ENCODE measurements at regions of chr17 and their contacts with region 1.

Region 1: GRCh38 chr17:7989781-7990655 is 12.4 kb upstream of the GUCY2D start:
- DNase-seq: peak; percentile 44
- ATAC-seq: peak; percentile 88
- H3K4me3 ChIP-seq: peak overlapping the region; percentile 20 to 71 (median 57)
- H3K27ac ChIP-seq: no peak overlapping the region
- H3K4me1 ChIP-seq: peaks cover 11% of the 10 kb centered on the region
- H3K27me3 ChIP-seq: peaks cover 3 to 29% of the 10 kb centered on the region in 2 experiments
- CTCF ChIP-seq: peak; percentile 98
- EP300 ChIP-seq: no peak
- POLR2A ChIP-seq: no peak; a peak in 1 of 4 replicates
- RAD21 ChIP-seq: peak; percentile 85

Region 2: DNA sequence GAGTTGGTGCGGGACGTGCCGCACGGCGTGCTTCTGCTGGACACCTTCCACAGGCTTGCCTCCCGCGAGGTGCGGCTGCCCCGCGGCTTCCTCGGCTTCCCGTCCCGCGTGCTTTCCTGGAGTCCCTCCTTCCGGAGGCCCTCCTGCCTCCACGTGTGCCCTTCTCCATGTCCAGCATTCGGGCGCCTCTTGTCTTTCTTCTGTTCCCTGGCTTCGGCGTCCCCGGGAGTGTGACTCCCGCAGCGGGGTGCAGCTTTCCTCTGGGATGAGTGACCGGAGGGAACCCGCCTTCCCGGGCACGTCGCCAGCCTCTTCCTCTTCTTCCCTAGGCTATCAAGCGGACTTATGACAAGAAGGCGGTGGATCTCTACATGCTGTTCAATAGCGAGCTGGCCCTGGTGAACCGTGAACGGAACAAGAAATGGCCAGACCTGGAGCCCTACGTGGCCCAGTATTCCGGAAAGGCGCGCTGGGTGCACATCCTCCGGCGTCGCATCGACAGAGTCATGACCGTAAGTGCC is 249.5 kb before region 1 on chr17:
- CTCF ChIA-PET with region 1: interaction called, 15 read pairs
- POLR2A ChIA-PET with region 1: no interaction called
- in situ Hi-C with region 1: no loop called
- intact Hi-C with region 1: loop called (anchors 5 kb)
- DNase-seq: no peak
- ATAC-seq: no peak
- H3K4me3 ChIP-seq: no peak overlapping the region
- H3K27ac ChIP-seq: no peak overlapping the region
- H3K4me1 ChIP-seq: peaks cover 14% of the 10 kb centered on the region
- H3K27me3 ChIP-seq: peaks cover 11 to 54% of the 10 kb centered on the region in 2 experiments
- CTCF ChIP-seq: no peak
- EP300 ChIP-seq: no peak
- POLR2A ChIP-seq: no peak
- RAD21 ChIP-seq: no peak

Region 3: DNA sequence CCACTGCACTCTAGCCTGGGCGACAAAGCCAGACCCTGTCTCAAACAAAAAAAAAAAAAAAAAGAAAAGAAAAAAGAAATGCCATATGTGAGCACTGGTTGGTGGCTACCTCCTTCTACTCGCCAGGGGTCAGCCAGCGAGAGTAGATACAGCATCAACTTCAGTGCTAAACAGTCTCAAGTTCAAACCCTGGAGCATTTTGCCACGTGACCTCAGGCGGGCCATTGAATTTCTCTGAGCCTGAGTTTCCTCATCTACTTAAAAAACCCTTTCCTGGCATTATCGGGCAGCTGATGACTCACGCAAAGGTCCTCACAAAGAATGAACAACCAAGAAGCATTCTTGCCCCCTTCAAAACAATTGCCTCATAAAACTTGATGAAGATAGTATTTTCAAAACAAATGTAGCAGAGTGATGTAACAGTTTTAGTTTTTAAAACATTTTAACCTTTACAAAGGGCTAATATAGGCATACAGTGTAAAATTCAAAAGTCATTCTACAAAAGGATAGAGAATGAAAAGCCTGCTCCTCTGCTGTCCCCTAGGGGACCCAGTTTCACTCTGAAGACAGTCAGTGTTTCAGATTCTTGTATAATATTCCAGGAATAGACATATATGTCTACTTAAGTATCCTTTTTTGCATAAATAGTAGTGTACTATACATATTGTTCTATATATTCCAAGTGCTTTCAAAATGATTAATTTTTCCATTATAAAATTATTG is 244.1 kb before region 1 on chr17:
- CTCF ChIA-PET with region 1: interaction called, 15 read pairs
- POLR2A ChIA-PET with region 1: no interaction called
- in situ Hi-C with region 1: no loop called
- intact Hi-C with region 1: loop called (anchors 5 kb)
- DNase-seq: peak; percentile 61
- ATAC-seq: peak; percentile 54
- H3K4me3 ChIP-seq: no peak overlapping the region
- H3K27ac ChIP-seq: no peak overlapping the region
- H3K4me1 ChIP-seq: peaks cover 37% of the 10 kb centered on the region
- H3K27me3 ChIP-seq: peaks cover 0 to 16% of the 10 kb centered on the region in 2 experiments; a peak in 3 of 5 replicates
- CTCF ChIP-seq: no peak
- EP300 ChIP-seq: no peak
- POLR2A ChIP-seq: no peak
- RAD21 ChIP-seq: no peak

Region 4: GRCh38 chr17:7862692-7863437 is 127.2 kb before region 1 on chr17:
- CTCF ChIA-PET with region 1: interaction called, 20 read pairs
- POLR2A ChIA-PET with region 1: no interaction called
- in situ Hi-C with region 1: no loop called
- intact Hi-C with region 1: loop called (anchors 5 kb)
- DNase-seq: peak; percentile 91
- ATAC-seq: peak; percentile 77
- H3K4me3 ChIP-seq: peak overlapping the region in 1 of 3 experiments; percentile 11; a peak in 1 of 6 replicates
- H3K27ac ChIP-seq: peak overlapping the region; percentile 81
- H3K4me1 ChIP-seq: peaks cover 64% of the 10 kb centered on the region
- H3K27me3 ChIP-seq: no peaks in the 10 kb centered on the region; a peak in 1 of 5 replicates
- CTCF ChIP-seq: peak; percentile 78
- EP300 ChIP-seq: peak in 1 of 2 experiments; percentile 82; a peak in 2 of 4 replicates
- POLR2A ChIP-seq: no peak
- RAD21 ChIP-seq: peak; percentile 71

Region 5: GRCh38 chr17:7873051-7873450 is 117.0 kb before region 1 on chr17:
- CTCF ChIA-PET with region 1: no interaction called
- POLR2A ChIA-PET with region 1: no interaction called
- in situ Hi-C with region 1: no loop called
- intact Hi-C with region 1: no loop called
- DNase-seq: no peak
- ATAC-seq: no peak
- H3K4me3 ChIP-seq: no peak overlapping the region
- H3K27ac ChIP-seq: no peak overlapping the region
- H3K4me1 ChIP-seq: peaks cover 10% of the 10 kb centered on the region
- H3K27me3 ChIP-seq: no peaks in the 10 kb centered on the region
- CTCF ChIP-seq: no peak
- EP300 ChIP-seq: no peak
- POLR2A ChIP-seq: no peak
- RAD21 ChIP-seq: no peak

Region 6: DNA sequence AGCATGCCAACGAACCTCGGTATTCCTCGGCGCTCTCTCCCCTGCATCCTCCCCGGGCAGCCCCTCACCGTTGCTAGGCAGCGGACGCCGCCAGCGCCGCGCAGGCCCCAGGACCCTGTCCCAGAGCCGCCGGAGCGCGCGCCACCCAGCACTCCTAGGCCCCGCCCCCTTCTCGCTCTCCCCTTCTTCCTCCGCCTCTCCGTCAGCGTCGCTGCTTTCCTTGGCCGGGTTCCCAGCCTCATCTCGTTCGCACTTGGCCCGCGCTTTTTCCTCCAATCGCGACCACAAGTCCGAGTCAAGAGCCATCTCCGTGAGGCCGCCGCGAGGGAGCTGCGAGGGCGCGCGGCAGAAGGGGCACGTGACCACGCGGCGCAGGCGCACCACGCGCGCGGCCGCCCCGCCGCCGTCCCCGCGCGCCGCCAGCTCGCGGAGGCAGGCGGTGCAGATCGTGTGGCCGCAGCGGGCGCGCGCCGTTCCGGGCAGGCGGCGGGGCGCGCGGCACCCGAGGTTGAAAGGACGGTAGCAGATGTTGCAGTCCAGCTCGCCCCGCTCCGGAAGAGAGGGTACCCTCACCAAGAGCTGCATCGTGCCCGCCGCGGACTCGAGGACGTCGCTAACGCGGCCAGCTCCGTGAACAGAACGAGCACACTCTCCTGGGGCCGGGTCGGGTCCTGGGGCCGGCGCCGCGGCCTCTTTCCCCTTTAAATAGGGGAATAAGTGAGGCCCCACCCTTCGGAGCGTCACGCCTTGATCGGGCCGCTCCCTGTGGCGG is 74.2 kb before region 1 on chr17 and contains the start of gene RNF227:
- CTCF ChIA-PET with region 1: interaction called, 70 read pairs
- POLR2A ChIA-PET with region 1: no interaction called
- in situ Hi-C with region 1: loop called (anchors 5 kb)
- intact Hi-C with region 1: loop called (anchors 1 kb)
- DNase-seq: peak; percentile 14
- ATAC-seq: peak; percentile 67
- H3K4me3 ChIP-seq: peak within 1 kb of the TSS in 2 of 3 experiments; percentile 45 to 62; a peak in 3 of 6 replicates
- H3K27ac ChIP-seq: no peak within 1 kb of the TSS
- H3K4me1 ChIP-seq: peaks cover 22% of the 10 kb centered on the region
- H3K27me3 ChIP-seq: peaks cover 0 to 3% of the 10 kb centered on the region in 2 experiments; a peak in 1 of 5 replicates
- CTCF ChIP-seq: no peak; the same call in 1 of the 2 replicates
- EP300 ChIP-seq: no peak
- POLR2A ChIP-seq: no peak
- RAD21 ChIP-seq: no peak
- total RNA-seq, gene RNF227: 0.20 and 0.38 TPM in 2 replicates

Region 7: GRCh38 chr17:7931709-7932482 is 58.1 kb before region 1 on chr17 and contains the starts of genes CNTROB and TRAPPC1:
- CTCF ChIA-PET with region 1: interaction called, 3 read pairs
- POLR2A ChIA-PET with region 1: no interaction called
- in situ Hi-C with region 1: no loop called
- intact Hi-C with region 1: loop called (anchors 5 kb)
- DNase-seq: peak; percentile 97
- ATAC-seq: peak; percentile 94
- H3K4me3 ChIP-seq: peak within 1 kb of the TSS; percentile 80 to 93 (median 85)
- H3K27ac ChIP-seq: peak within 1 kb of the TSS; percentile 67
- H3K4me1 ChIP-seq: peaks cover 26% of the 10 kb centered on the region
- H3K27me3 ChIP-seq: no peaks in the 10 kb centered on the region; a peak in 1 of 5 replicates
- CTCF ChIP-seq: no peak
- EP300 ChIP-seq: 0 out of 4 replicates have a peak, but pooled peaks of 1 of the 2 experiments have one; percentile 24
- POLR2A ChIP-seq: peak; percentile 50 to 76
- RAD21 ChIP-seq: 0 out of 2 replicates have a peak, but pooled peaks have one; percentile 7
- total RNA-seq, gene CNTROB: 13.3 and 24.1 TPM in 2 replicates
- total RNA-seq, gene TRAPPC1: 28.1 and 36.9 TPM in 2 replicates

Region 8: DNA sequence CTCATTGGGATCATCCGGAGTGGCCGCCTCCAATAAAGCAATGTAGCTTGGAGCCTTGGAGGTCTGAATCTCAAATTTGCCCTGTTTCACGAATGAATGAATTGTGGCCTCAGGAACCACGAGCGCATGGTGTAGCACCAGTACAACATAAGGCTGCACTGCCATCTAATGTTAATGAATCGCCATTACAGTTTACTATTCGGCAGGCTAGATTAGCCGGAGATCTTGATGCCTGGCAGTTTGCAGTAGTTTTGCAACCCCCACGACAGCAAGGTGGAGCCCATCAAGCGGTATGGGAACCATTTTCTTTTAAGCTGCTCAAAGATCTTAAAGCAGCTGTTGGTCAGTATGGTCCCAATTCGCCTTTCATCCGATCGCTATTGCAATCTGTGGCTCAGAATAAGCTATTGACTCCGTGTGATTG is 67.7 kb after region 1 on chr17:
- CTCF ChIA-PET with region 1: interaction called, 15 read pairs
- POLR2A ChIA-PET with region 1: no interaction called
- in situ Hi-C with region 1: no loop called
- intact Hi-C with region 1: no loop called
- DNase-seq: peak; percentile 75
- ATAC-seq: peak; percentile 46
- H3K4me3 ChIP-seq: peak overlapping the region; percentile 38 to 64 (median 51); a peak in 5 of 6 replicates
- H3K27ac ChIP-seq: peak overlapping the region; percentile 92
- H3K4me1 ChIP-seq: peaks cover 56% of the 10 kb centered on the region
- H3K27me3 ChIP-seq: peaks cover 3 to 32% of the 10 kb centered on the region in 2 experiments; a peak in 4 of 5 replicates
- CTCF ChIP-seq: peak; percentile 82
- EP300 ChIP-seq: no peak
- POLR2A ChIP-seq: peak in 1 of 2 experiments; percentile 52; a peak in 2 of 4 replicates
- RAD21 ChIP-seq: peak; percentile 61; the same call in 1 of the 2 replicates

Region 9: DNA sequence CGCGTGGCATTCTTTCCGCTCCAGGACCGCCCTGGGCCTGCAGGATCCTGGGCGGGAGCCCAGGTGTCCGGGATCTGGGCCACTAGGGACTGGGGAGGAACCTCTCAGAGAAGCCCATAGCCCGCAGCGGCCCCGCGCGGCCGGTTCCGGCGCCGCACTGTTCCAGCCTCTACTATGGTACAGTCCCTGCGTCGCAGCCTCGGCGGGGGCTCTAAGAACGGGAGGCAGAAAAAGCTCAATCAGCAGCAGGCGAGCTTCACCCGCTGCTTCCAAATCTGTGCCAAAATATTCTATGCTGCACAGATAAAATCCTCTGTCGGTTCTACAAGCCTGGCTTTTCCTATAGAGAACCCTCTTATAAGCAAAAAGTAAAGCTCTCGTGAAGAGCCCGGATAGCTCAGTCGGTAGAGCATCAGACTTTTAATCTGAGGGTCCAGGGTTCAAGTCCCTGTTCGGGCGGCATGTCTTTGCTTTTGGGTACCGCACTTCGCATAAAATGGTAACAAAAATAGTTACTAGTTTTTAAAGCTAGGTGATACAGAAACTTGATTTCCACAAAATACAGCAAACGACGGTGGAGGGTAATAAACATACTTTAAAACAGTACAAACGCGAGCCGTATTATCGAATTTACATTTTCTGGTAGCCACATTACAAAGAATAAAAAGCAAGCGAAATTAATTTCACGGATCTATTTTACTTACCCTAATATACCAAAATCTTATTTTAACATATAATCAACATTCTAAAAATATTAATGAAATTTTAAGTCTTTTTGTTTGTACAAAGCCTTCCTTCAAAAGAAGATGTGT is 129.0 kb after region 1 on chr17:
- CTCF ChIA-PET with region 1: no interaction called
- POLR2A ChIA-PET with region 1: no interaction called
- in situ Hi-C with region 1: no loop called
- intact Hi-C with region 1: no loop called
- DNase-seq: peak; percentile 77
- ATAC-seq: peak; percentile 75
- H3K4me3 ChIP-seq: peak overlapping the region; percentile 68 to 95 (median 94)
- H3K27ac ChIP-seq: peak overlapping the region; percentile 10
- H3K4me1 ChIP-seq: peaks cover 52% of the 10 kb centered on the region
- H3K27me3 ChIP-seq: peaks cover 6 to 58% of the 10 kb centered on the region in 2 experiments
- CTCF ChIP-seq: peak; percentile 81
- EP300 ChIP-seq: no peak
- POLR2A ChIP-seq: no peak
- RAD21 ChIP-seq: peak; percentile 53; the same call in 1 of the 2 replicates

Measured in HepG2 (cell line).